Activated naive CD4-positive, alpha-beta T cell treated with anti-CD3 and anti-CD28 coated beads for 36 hours (primary cell): ENCODE measurements at regions of chrX and their contacts with region 1.

Region 1: GRCh38 chrX:65034668-65035445 is 58.6 kb upstream of the ZC4H2 start:
- DNase-seq: peak; percentile 83
- H3K4me3 Mint-ChIP-seq: peak within 1 kb of the TSS; percentile 90
- H3K27ac Mint-ChIP-seq: peak within 1 kb of the TSS; percentile 88
- H3K4me1 Mint-ChIP-seq: peaks cover 27% of the 10 kb centered on the region
- H3K27me3 Mint-ChIP-seq: no peaks in the 10 kb centered on the region

Region 2: GRCh38 chrX:63754860-63755582 is 1279.8 kb before region 1 on chrX:
- CTCF ChIA-PET with region 1: no interaction called
- intact Hi-C with region 1: loop called (anchors 10 kb)
- DNase-seq: peak; percentile 90
- H3K4me3 Mint-ChIP-seq: peak overlapping the region; percentile 90
- H3K27ac Mint-ChIP-seq: peak overlapping the region; percentile 96
- H3K4me1 Mint-ChIP-seq: peaks cover 29% of the 10 kb centered on the region
- H3K27me3 Mint-ChIP-seq: no peaks in the 10 kb centered on the region

Region 3: GRCh38 chrX:64894454-64895038 is 140.3 kb before region 1 on chrX:
- CTCF ChIA-PET with region 1: no interaction called
- intact Hi-C with region 1: loop called (anchors 2 kb)
- DNase-seq: peak; percentile 56
- H3K4me3 Mint-ChIP-seq: no peak overlapping the region
- H3K27ac Mint-ChIP-seq: no peak overlapping the region
- H3K4me1 Mint-ChIP-seq: peaks cover 3% of the 10 kb centered on the region
- H3K27me3 Mint-ChIP-seq: no peaks in the 10 kb centered on the region

Region 4: DNA sequence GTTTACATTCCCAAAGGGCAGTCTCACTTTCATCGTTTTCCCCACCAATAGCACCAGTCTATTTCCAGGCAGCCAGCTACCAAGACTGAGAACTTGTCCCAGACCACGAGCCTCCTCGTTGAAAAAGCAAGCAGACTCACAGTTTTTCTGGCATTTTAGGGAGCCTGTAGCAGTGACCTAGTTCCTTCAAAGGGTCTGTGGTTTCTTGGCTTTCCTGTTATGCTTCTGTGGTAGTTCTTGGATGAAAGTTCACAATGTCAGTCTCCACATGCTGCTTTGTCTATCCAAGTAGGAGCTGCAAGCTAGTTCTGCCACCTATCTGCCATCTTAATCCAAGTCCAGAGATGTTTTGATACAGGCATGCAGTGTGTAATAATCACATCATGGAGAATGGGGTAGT is 93.0 kb after region 1 on chrX:
- CTCF ChIA-PET with region 1: interaction called, 3 read pairs
- intact Hi-C with region 1: loop called (anchors 2 kb)
- DNase-seq: peak; percentile 6
- H3K4me3 Mint-ChIP-seq: no peak overlapping the region
- H3K27ac Mint-ChIP-seq: peak overlapping the region; percentile 36
- H3K4me1 Mint-ChIP-seq: peaks cover 16% of the 10 kb centered on the region
- H3K27me3 Mint-ChIP-seq: no peaks in the 10 kb centered on the region

Region 5: DNA sequence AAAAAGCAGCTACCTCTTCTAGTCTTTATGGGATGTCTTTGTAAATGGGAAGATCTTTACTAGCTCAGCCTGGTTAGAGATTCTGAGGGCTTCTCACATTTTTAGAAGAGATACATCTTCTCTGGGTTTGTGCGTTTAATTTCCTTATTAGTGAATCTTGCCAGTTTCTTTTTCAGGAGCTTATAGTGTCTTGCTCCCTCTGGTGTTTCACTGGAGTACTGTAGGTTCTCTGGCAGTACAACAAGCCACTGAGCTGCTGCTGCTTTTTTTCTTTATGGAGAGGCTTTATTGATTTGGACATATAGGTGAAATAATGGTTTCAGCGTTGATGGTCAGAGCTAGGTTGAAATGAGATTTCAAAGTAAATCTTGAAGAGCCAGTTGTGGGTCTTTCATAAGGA is 416.8 kb after region 1 on chrX:
- CTCF ChIA-PET with region 1: no interaction called
- intact Hi-C with region 1: loop called (anchors 2 kb)
- DNase-seq: peak; percentile 26
- H3K4me3 Mint-ChIP-seq: no peak overlapping the region
- H3K27ac Mint-ChIP-seq: no peak overlapping the region
- H3K4me1 Mint-ChIP-seq: no peaks in the 10 kb centered on the region
- H3K27me3 Mint-ChIP-seq: no peaks in the 10 kb centered on the region

Region 6: DNA sequence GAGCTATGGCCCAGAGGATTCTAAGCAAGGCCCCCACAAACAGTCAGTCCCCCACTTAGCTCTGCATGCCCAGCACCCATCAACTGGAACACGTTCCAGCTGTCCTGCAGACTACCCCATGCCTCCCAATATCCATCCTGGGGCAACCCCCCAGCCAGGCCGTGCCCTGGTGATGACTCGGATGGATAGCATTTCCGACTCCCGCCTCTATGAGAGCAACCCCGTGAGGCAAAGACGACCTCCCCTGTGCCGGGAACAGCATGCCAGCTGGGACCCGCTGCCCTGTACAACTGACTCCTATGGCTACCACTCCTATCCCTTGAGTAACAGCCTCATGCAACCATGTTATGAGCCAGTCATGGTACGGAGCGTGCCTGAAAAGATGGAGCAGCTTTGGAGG is 467.8 kb after region 1 on chrX:
- CTCF ChIA-PET with region 1: no interaction called
- intact Hi-C with region 1: no loop called
- DNase-seq: no peak
- H3K4me3 Mint-ChIP-seq: no peak overlapping the region
- H3K27ac Mint-ChIP-seq: no peak overlapping the region
- H3K4me1 Mint-ChIP-seq: no peaks in the 10 kb centered on the region
- H3K27me3 Mint-ChIP-seq: no peaks in the 10 kb centered on the region